Heart right ventricle (tissue), 16 donors: ENCODE measurements at regions of chr1 and their contacts with region 1.

Region 1: DNA sequence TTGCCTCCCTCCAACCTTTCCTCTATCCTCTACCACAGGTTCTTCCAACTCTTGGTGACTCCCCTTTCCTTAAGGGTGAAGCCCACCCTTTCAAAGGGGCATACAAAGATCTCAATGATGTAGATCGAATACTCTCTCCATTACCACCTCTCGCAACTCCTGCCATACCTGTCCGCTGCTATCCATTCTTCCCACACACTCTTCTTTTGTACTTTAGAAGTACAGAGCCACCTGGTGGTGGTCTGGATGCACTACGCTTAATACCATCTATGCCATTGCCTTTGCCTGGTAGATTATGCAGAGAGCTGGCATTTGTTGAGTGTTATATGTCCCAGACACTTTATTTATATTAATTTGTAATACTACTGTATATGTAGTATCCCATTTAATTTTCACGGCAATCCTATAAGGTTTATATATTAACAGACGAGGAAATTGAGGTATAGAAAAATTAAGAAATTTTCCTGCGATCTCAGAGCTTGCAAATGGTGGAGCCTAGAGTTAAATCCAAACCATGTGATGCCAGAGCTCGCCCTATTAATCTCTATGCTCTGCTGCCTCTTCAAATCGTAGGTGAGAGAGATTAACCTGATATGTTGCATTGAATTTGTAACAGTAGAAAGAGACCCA is 22.9 kb downstream of the TSHB start:
- DNase-seq: peak in 1 of 2 donors; percentile 35
- ATAC-seq: peak in 5 of 8 donors; percentile 55 to 78 (median 69)
- H3K4me3 ChIP-seq: no peak overlapping the region
- H3K27ac ChIP-seq: no peak overlapping the region
- H3K4me1 ChIP-seq: no peaks in the 10 kb centered on the region
- H3K27me3 ChIP-seq: no peaks in the 10 kb centered on the region
- CTCF ChIP-seq: peak; percentile 44 to 87 (median 84)

Region 2: GRCh38 chr1:114771992-114772391 is 280.6 kb before region 1 on chr1:
- intact Hi-C with region 1: no loop called
- DNase-seq: no peak
- ATAC-seq: no peak
- H3K4me3 ChIP-seq: no peak overlapping the region
- H3K27ac ChIP-seq: no peak overlapping the region
- H3K4me1 ChIP-seq: no peaks in the 10 kb centered on the region
- H3K27me3 ChIP-seq: no peaks in the 10 kb centered on the region
- CTCF ChIP-seq: no peak

Region 3: DNA sequence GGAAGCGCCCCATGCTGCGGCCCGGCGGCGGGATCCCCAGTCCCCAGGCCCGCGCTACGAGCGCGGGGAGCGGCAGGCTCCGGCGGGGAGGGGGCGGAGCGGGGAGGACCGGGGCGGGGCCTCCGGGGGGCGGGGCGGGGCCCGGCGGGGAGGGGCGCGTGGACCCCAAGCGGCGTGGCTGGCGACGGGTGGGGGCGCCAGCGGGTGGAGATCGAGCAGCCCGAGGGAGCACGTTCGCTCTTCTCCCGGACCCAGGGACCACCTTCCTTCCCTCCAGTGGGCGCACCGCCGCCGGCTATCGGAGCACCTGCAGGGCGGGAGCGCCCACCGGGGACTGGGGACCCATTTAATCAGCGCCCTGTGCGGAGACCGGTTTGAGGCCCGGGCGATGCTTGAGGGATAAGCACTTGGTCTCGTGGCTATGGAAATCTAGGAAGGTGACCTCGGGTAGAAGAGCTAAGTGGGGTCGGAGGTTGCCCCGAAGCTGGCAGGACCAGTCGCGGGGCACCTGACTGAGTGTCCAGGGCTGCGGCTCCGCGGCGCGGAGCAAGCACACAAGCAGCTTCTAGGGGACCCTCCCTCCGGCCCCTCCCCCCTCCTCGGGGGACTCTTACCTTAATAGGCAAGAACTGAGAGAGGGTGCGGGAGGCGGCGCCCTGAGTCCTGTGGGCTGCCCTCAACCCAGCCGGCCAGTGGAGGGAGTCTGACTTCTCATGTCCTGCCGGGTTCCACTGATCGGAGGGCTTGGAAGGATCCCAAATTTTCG is 37.0 kb after region 1 on chr1 and contains the start of gene TSPAN2:
- intact Hi-C with region 1: loop called in 1 of 10 experiments (anchors 5 kb)
- DNase-seq: peak; percentile 74 to 86
- ATAC-seq: peak; percentile 87 to 94 (median 92)
- H3K4me3 ChIP-seq: peak within 1 kb of the TSS; percentile 46 to 87 (median 72)
- H3K27ac ChIP-seq: peak within 1 kb of the TSS; percentile 11 to 92 (median 82)
- H3K4me1 ChIP-seq: peaks cover 0 to 61% (median 23%) of the 10 kb centered on the region in 9 donors
- H3K27me3 ChIP-seq: no peaks in the 10 kb centered on the region
- CTCF ChIP-seq: peak in 6 of 9 donors; percentile 30 to 63 (median 48)
- total RNA-seq, gene TSPAN2: 4.0 to 17.7 (median 9.5) TPM

Region 4: DNA sequence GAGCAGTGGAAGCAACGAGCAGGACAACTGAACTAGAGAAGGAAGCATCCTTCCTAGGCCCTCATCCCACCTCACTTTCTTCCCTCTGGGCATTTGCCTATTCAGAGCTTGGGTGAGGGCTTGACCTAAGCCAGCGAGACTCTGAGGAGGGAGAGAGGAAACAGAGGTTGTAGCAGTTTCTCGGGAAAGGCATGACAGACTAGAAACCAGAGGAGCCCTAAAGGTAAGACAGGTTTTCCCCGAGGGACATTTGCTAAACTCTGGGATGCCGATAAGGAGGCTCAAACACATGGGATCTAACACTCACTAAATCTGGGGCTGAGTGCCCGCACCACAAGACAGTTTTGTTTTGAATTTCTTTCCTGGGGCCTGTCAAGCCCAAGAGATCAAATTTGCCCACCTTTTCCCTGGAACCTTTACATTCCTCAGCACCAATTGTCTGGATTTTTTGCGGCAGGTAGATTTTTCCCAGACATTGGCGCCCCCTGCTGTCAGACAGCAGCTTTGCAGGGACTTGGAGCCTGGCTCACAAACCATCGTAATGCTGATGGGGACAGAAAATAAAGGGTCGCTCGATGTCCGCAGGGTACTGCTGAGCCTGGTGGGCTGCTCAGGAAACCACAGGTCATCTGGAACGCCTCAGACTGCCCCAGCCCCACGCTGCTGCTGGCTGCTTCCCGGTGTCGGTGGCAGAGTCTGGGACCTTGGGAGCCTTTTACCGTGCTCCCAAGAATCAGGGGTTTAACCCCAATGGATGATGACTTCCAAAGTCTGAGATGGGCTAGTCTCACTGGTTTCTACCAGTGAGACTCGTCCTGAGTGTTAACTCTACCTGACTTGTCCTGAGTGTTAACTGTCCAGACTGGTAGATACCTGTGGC is 60.2 kb after region 1 on chr1:
- intact Hi-C with region 1: loop called in 3 of 10 experiments (anchors 5 kb)
- DNase-seq: peak; percentile 23 to 43
- ATAC-seq: peak; percentile 19 to 62 (median 44)
- H3K4me3 ChIP-seq: no peak overlapping the region
- H3K27ac ChIP-seq: no peak overlapping the region
- H3K4me1 ChIP-seq: peaks cover 0 to 16% (median 0%) of the 10 kb centered on the region in 9 donors
- H3K27me3 ChIP-seq: peaks cover 0 to 6% (median 0%) of the 10 kb centered on the region in 7 donors
- CTCF ChIP-seq: peak; percentile 90 to 96 (median 95)

Region 5: DNA sequence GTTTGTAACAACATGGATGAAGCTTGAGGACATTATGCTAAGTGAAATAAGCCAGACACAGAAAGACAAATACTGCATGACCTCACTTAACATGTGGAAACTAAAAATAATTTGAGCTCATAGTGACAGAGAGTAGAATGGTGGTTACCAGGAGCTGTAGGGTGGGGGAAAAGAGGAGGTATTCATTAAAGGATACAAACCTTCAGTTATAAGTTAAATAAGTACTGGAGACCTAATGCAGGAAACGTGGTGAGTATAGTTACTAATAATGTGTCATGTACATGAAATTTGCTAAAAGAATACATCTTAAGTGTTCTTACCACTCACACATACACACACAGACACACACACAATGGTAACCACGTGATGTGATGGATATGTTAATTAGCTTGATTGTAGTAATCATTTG is 198.8 kb after region 1 on chr1:
- intact Hi-C with region 1: no loop called
- DNase-seq: no peak
- ATAC-seq: peak; percentile 86 to 97 (median 94)
- H3K4me3 ChIP-seq: no peak overlapping the region
- H3K27ac ChIP-seq: peak overlapping the region in 8 of 10 donors; percentile 25 to 83 (median 71)
- H3K4me1 ChIP-seq: peaks cover 5 to 21% (median 15%) of the 10 kb centered on the region in 9 donors
- H3K27me3 ChIP-seq: no peaks in the 10 kb centered on the region
- CTCF ChIP-seq: no peak